ENCODE measurements at regions of chr11 and their contacts with region 1.

Region 1: DNA sequence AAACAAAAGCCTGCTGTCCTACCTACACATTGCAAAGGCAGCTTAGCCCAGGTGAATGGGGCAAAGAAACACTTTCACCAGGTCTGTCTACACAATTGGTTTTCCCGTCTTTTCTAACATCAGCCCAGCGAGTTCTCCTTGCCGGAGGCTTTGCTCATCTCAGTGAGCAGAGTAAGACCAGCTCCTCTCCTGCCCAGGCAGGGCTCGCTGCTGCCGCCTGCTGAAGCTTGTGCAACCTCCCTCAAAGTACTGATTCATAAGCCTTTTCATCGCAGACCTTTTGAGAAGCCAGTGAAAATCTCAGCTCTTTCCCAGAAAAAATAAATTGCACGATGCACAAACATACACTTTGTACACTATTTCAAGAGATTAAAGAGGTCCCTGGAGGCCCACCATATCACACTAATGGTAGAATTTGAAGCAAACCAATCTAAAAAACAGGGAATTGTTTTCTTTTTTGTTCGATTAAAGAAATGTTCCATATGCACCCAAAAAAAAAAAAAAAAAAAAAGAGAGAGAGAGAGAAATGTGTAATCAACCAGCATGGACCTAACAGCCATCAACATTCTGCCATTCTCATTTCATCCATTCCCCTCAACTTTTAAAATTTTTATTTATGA is 328.1 kb upstream of the MPPED2 start:
- DNase-seq: peak; percentile 13
- H3K4me3 Mint-ChIP-seq: no peak overlapping the region
- H3K27ac Mint-ChIP-seq: no peak overlapping the region
- H3K4me1 Mint-ChIP-seq: no peaks in the 10 kb centered on the region
- H3K27me3 Mint-ChIP-seq: no peaks in the 10 kb centered on the region

Region 2: DNA sequence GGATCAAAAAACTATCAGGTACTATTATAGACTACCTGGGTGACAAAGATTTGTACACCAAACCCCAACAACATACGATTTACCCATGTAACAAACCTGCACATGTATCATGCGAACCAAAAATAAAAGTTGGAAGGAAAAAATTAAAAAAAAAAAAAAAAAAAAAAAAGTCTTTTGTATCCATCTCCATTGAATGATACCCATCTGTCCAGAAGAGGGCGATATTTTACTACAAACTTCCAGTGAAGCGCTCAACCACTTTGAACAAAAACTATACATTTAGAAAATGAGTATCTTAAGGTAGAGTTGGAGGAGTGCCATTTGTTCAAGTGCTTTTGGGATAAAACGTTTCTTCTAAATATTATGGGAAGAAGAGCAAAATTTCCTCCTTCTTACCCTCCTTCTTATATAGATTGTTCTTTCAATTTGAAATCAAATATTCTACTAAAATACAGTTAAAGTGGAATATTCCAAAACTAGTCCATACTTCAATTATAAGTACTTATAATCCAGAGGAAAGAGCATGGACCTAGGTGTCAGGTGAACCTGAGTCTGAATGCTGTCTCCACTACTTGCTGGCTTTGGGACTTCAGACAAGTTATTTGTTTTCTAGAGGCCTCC is 568.1 kb before region 1 on chr11:
- CTCF ChIA-PET with region 1: interaction called, 3 read pairs
- POLR2A ChIA-PET with region 1: no interaction called
- intact Hi-C with region 1: loop called (anchors 1 kb)
- DNase-seq: no peak
- H3K4me3 Mint-ChIP-seq: no peak overlapping the region
- H3K27ac Mint-ChIP-seq: no peak overlapping the region
- H3K4me1 Mint-ChIP-seq: peaks cover 3% of the 10 kb centered on the region
- H3K27me3 Mint-ChIP-seq: no peaks in the 10 kb centered on the region

Region 3: GRCh38 chr11:30868597-30869073 is 45.6 kb before region 1 on chr11:
- CTCF ChIA-PET with region 1: no interaction called
- POLR2A ChIA-PET with region 1: no interaction called
- intact Hi-C with region 1: no loop called
- DNase-seq: no peak
- H3K4me3 Mint-ChIP-seq: no peak overlapping the region
- H3K27ac Mint-ChIP-seq: no peak overlapping the region
- H3K4me1 Mint-ChIP-seq: no peaks in the 10 kb centered on the region
- H3K27me3 Mint-ChIP-seq: no peaks in the 10 kb centered on the region

Region 4: DNA sequence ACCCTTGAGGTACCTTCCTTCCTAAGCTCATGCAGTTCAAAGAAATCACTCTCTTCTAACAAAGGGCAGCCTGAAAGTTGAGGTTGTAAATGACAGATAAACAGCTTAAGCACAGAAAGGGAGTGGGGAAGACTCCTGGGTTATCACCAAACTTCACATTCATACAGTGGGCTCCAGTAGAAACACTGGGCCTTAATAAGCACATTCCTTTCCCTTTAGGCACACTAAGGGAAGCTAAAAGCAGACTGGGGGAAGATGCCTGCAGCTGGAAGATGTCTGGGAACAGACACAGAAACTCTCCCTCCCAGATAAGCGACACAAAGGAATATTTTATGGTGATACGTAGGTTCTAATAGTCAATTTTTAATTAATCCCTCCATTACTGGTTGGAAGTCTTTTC is 22.2 kb after region 1 on chr11:
- CTCF ChIA-PET with region 1: no interaction called
- POLR2A ChIA-PET with region 1: no interaction called
- intact Hi-C with region 1: no loop called
- DNase-seq: no peak
- H3K4me3 Mint-ChIP-seq: no peak overlapping the region
- H3K27ac Mint-ChIP-seq: no peak overlapping the region
- H3K4me1 Mint-ChIP-seq: no peaks in the 10 kb centered on the region
- H3K27me3 Mint-ChIP-seq: no peaks in the 10 kb centered on the region

Measured in activated CD4-positive, alpha-beta memory T cell treated with anti-CD3 and anti-CD28 coated beads for 36 hours (primary cell).